Heart left ventricle (tissue), 16 donors: ENCODE measurements at regions of chr15 and their contacts with region 1.

Region 1: GRCh38 chr15:41416742-41417406 is at the start of gene RTF1:
- DNase-seq: peak; percentile 94 to 98 (median 96)
- ATAC-seq: peak; percentile 96 to 98 (median 98)
- H3K4me3 ChIP-seq: peak within 1 kb of the TSS; percentile 80 to 99 (median 98)
- H3K27ac ChIP-seq: peak within 1 kb of the TSS; percentile 25 to 94 (median 85)
- H3K4me1 ChIP-seq: peaks cover 5 to 38% (median 26%) of the 10 kb centered on the region in 12 donors
- H3K27me3 ChIP-seq: no peaks in the 10 kb centered on the region
- CTCF ChIP-seq: no peak
- POLR2A ChIP-seq: peak in 1 of 2 donors; percentile 86
- total RNA-seq, gene RTF1: 19.1 to 33.3 (median 28.5) TPM

Region 2: DNA sequence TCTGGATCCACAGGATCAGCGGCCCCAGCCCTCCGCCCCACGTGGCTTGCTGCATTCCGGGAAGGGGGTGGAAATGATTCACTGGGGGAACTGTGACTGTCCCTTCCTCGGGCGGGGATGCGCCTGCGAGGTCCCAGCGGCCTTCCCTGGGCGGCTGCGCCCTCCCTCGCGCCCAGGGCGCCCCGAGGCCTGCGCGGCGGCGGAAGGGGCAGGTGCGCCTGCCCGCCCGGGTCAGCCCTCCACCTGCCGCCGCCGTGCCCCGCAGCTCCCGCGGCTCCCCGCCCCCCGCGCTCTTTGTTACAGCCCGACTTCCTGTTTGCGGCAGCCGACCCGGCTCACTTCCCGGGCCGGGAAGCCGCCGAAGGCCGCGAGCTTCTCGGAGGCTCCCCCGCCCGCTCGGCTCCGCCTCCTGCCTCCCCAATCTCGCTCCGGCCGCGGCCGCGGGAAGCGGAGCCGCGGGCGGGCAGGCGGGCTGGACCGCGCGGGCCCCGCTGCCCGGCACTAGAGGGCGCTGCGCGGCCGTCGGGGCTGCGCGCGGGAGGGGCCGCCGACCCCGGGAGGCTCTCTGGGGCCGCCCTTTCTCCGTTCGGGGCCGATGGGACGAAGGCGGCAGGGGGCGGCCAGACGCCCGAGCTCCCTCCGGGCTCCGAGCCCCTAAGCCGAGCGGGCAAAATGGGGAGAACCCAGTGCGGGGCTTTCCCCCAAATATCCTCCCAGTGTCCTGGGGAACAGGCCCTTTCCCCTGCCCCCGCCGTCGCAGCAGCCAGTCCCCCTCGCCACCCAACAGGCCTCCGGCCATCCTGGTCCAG is 475.1 kb before region 1 on chr15:
- intact Hi-C with region 1: no loop called
- DNase-seq: peak; percentile 86 to 92 (median 87)
- ATAC-seq: peak; percentile 22 to 83 (median 79)
- H3K4me3 ChIP-seq: peak overlapping the region; percentile 41 to 70 (median 59)
- H3K27ac ChIP-seq: peak overlapping the region; percentile 83 to 96 (median 92)
- H3K4me1 ChIP-seq: peaks cover 7 to 60% (median 48%) of the 10 kb centered on the region in 12 donors
- H3K27me3 ChIP-seq: no peaks in the 10 kb centered on the region
- CTCF ChIP-seq: peak; percentile 29 to 96 (median 67)
- POLR2A ChIP-seq: no peak

Region 3: GRCh38 chr15:41401904-41402267 is 15.0 kb before region 1 on chr15:
- intact Hi-C with region 1: loop called in 1 of 10 experiments (anchors 2 kb)
- DNase-seq: no peak
- ATAC-seq: peak in 3 of 4 donors; percentile 10 to 23 (median 19)
- H3K4me3 ChIP-seq: peak overlapping the region; percentile 64 to 99 (median 82)
- H3K27ac ChIP-seq: peak overlapping the region; percentile 1 to 93 (median 84)
- H3K4me1 ChIP-seq: peaks cover 0 to 17% (median 7%) of the 10 kb centered on the region in 12 donors
- H3K27me3 ChIP-seq: no peaks in the 10 kb centered on the region
- CTCF ChIP-seq: no peak
- POLR2A ChIP-seq: no peak

Region 4: DNA sequence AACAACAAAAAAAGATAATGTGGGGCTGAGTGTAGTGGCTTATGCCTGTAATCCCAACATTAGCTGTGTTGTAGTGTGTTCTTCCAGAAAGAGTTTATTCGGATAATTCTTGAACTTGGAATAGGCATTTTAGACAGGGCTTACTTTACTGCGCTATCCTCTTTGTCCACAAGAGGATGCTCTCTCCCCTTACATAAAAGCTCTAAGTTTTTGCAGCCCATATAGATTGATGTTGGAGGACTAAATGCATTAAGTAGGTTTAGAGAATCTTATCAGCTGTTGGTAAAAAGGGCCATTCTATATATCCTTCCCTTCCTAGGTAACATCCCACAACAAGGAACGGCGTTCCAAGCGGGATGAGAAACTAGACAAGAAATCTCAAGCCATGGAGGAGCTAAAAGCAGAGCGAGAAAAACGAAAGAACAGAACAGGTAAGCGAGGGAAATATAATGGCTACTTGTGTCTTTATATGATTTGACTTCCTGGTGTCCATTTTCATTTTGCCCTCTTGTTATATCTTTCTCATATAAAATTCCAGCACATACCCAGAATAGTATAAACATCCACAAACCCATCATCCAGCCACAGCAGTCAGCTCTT is 49.0 kb after region 1 on chr15:
- intact Hi-C with region 1: no loop called
- DNase-seq: no peak
- ATAC-seq: no peak
- H3K4me3 ChIP-seq: no peak overlapping the region
- H3K27ac ChIP-seq: no peak overlapping the region
- H3K4me1 ChIP-seq: no peaks in the 10 kb centered on the region
- H3K27me3 ChIP-seq: no peaks in the 10 kb centered on the region
- CTCF ChIP-seq: peak; percentile 59 to 90 (median 68)
- POLR2A ChIP-seq: no peak

Region 5: DNA sequence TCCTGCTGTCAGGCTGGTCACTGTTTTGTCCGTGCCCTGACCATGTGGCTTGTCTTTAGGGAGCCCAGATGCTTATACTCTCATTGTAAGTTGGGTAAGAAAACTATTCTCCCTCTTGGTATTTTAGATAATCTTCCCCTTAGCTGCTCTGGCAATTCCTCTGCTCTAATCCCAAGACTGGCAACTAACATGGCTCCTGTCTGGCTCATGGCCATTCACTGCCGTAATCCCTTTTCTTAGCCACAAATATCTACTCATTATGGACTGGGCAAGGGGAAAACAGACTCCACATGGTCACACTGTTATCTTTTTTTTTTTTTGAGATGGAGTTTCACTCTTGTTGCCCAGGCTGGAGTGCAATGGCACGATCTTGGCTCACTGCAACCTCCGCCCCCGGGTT is 180.9 kb after region 1 on chr15:
- intact Hi-C with region 1: no loop called
- DNase-seq: no peak
- ATAC-seq: no peak
- H3K4me3 ChIP-seq: no peak overlapping the region
- H3K27ac ChIP-seq: no peak overlapping the region
- H3K4me1 ChIP-seq: no peaks in the 10 kb centered on the region
- H3K27me3 ChIP-seq: no peaks in the 10 kb centered on the region
- CTCF ChIP-seq: no peak
- POLR2A ChIP-seq: no peak